ENCODE measurements at regions of chr15 and their contacts with region 1.

Region 1: GRCh38 chr15:66707310-66708082 is 5.5 kb downstream of the SMAD6 start:
- DNase-seq: peak; percentile 69
- ATAC-seq: peak; percentile 84
- H3K4me3 Mint-ChIP-seq: no peak overlapping the region
- H3K27ac Mint-ChIP-seq: no peak overlapping the region
- H3K4me1 Mint-ChIP-seq: peaks cover 34% of the 10 kb centered on the region
- H3K27me3 Mint-ChIP-seq: peaks cover 23% of the 10 kb centered on the region
- CTCF ChIP-seq: no peak

Region 2: GRCh38 chr15:66566963-66567531 is 140.4 kb before region 1 on chr15:
- CTCF ChIA-PET with region 1: interaction called, 11 read pairs
- POLR2A ChIA-PET with region 1: no interaction called
- DNase-seq: peak; percentile 77
- ATAC-seq: peak; percentile 49
- H3K4me3 Mint-ChIP-seq: peak overlapping the region; percentile 19; the same call in 1 of the 2 replicates
- H3K27ac Mint-ChIP-seq: peak overlapping the region; percentile 91
- H3K4me1 Mint-ChIP-seq: peaks cover 30% of the 10 kb centered on the region
- H3K27me3 Mint-ChIP-seq: no peaks in the 10 kb centered on the region
- CTCF ChIP-seq: peak; percentile 63

Region 3: DNA sequence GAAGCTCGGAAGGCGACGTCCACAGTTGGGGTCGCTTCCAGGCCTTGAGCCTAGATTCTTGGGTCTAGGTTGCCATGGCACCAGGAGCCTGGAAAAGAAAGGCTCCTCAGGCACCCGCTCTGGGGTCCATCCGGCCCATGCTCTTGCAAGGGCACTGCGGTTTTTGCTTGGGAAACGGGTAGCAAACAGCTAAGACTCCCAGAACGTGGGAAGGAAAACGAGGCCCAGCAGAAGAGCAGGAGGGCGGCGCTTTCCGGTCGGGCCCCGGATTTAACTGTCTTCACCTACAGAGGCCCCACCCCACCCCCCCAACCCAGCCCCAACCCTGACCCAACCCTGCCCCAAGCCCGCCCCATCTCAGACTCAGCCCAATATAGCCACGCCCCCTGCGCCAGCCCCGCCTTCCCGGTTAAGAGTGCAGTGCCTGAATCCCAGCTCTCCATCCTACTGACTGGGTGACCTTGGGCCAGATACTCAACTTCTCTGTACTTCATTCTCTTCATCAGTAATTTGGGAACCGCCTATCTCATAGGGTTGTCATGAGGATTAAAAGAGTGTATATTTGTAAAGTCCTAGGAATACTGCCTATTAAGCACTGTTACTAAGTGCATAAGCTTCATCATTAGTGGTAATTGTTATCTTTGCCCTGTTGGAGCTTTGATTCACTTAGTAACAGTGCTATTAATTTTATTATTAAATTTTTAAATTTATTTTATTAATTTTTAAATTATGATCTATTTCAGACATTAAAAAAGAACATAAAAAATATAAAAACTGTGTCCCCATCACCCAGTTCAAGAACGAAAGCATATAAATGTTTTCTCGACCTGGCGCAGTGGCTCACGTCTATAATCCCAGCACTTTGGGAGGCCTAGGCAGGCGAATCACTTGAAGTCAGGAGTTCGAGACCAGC is 33.8 kb before region 1 on chr15:
- CTCF ChIA-PET with region 1: interaction called, 13 read pairs
- POLR2A ChIA-PET with region 1: no interaction called
- DNase-seq: peak; percentile 95
- ATAC-seq: peak; percentile 82
- H3K4me3 Mint-ChIP-seq: no peak overlapping the region
- H3K27ac Mint-ChIP-seq: no peak overlapping the region
- H3K4me1 Mint-ChIP-seq: peaks cover 29% of the 10 kb centered on the region
- H3K27me3 Mint-ChIP-seq: peaks cover 11% of the 10 kb centered on the region
- CTCF ChIP-seq: no peak

Region 4: GRCh38 chr15:66766282-66767230 is 59.1 kb after region 1 on chr15:
- CTCF ChIA-PET with region 1: interaction called, 53 read pairs
- POLR2A ChIA-PET with region 1: no interaction called
- DNase-seq: no peak
- ATAC-seq: no peak
- H3K4me3 Mint-ChIP-seq: no peak overlapping the region
- H3K27ac Mint-ChIP-seq: no peak overlapping the region
- H3K4me1 Mint-ChIP-seq: peaks cover 37% of the 10 kb centered on the region
- H3K27me3 Mint-ChIP-seq: no peaks in the 10 kb centered on the region
- CTCF ChIP-seq: no peak

Region 5: DNA sequence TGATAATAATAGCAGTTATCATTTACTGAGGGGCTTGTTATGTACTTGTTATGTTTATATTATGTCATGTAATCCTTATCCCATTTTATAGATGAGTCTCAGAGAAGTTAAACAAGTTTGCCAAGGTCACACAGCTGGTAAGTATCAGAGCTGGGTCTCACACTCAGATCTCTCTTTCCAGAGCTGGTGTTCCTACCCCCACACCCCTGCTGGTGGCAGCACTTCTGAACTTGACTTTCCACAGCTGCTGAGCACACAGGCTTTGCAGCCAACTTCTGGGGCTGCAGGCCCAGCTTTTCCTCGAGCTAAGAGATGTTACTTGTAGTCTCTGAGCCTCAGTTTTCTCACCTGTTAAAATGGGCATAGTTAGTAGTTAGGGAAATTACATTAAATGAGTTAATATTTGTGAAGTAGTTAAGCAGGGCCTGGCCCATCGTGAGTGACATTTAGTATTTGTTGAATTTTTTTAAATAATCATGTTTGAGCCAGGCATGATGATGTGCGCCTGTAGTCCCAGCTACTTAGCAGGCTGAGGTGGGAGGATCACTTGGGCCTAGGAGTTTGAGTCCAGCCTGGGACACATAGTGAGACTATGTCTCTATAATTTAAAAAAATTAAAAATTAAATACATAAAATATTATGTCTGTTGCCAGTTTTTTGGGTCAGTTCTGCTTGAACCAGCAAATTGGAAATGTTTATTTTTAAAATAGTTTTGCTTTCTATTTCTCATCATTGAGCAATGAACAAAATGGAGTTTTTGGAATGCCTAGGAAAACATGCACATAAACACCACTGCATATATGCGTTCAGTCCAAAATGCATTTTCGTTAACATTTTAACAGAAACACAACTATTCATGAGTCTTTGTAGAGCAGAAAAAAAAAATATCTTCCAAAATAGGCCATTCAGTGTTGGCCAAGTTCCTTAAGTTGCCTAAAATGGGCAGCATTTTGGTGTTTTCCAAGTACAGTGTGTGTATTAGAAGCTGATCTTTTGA is 81.8 kb after region 1 on chr15:
- CTCF ChIA-PET with region 1: interaction called, 10 read pairs
- POLR2A ChIA-PET with region 1: no interaction called
- DNase-seq: peak; percentile 66
- ATAC-seq: peak; percentile 92
- H3K4me3 Mint-ChIP-seq: no peak overlapping the region
- H3K27ac Mint-ChIP-seq: no peak overlapping the region
- H3K4me1 Mint-ChIP-seq: peaks cover 8% of the 10 kb centered on the region; the same call in 1 of the 2 replicates
- H3K27me3 Mint-ChIP-seq: no peaks in the 10 kb centered on the region
- CTCF ChIP-seq: no peak